ENCODE measurements at regions of chr19 and their contacts with region 1.

Region 1: GRCh38 chr19:17847538-17848366 is at the start of gene JAK3:
- DNase-seq: no peak
- H3K4me3 ChIP-seq: peak within 1 kb of the TSS; percentile 52
- H3K27me3 ChIP-seq: no peaks in the 10 kb centered on the region
- CTCF ChIP-seq: no peak
- polyA plus RNA-seq, gene JAK3: 3.3 and 6.1 TPM in 2 replicates

Region 2: GRCh38 chr19:17336872-17337722 is 510.7 kb before region 1 on chr19 and contains the start of gene GTPBP3:
- CTCF ChIA-PET with region 1: no interaction called
- POLR2A ChIA-PET with region 1: interaction called, 17 read pairs
- DNase-seq: peak; percentile 86
- H3K4me3 ChIP-seq: peak within 1 kb of the TSS; percentile 72
- H3K27me3 ChIP-seq: no peaks in the 10 kb centered on the region
- CTCF ChIP-seq: no peak
- polyA plus RNA-seq, gene GTPBP3: 4.9 and 6.3 TPM in 2 replicates

Measured in BJ (cell line).